Activated T-helper 1 cell treated with anti-CD3 and anti-CD28 coated beads, Interleukin-12 subunit alpha, Interleukin-12 subunit beta, Interleukin-2, Interleukin-4 antibody, amounts not matched to agents 30 ng/mL and 10 ng/mL and 1 ng/mL, durations not matched to agents 14 hours and 24 hours and 36 hours (primary cell): ENCODE measurements at regions of chr17 and their contacts with region 1.

Region 1: GRCh38 chr17:7561028-7561575 is 617 bp upstream of the SENP3 start:
- DNase-seq: peak; percentile 81
- H3K4me3 Mint-ChIP-seq: peak overlapping the region; percentile 97
- H3K27ac Mint-ChIP-seq: peak overlapping the region; percentile 92
- H3K4me1 Mint-ChIP-seq: peaks cover 56% of the 10 kb centered on the region
- H3K27me3 Mint-ChIP-seq: no peaks in the 10 kb centered on the region

Region 2: DNA sequence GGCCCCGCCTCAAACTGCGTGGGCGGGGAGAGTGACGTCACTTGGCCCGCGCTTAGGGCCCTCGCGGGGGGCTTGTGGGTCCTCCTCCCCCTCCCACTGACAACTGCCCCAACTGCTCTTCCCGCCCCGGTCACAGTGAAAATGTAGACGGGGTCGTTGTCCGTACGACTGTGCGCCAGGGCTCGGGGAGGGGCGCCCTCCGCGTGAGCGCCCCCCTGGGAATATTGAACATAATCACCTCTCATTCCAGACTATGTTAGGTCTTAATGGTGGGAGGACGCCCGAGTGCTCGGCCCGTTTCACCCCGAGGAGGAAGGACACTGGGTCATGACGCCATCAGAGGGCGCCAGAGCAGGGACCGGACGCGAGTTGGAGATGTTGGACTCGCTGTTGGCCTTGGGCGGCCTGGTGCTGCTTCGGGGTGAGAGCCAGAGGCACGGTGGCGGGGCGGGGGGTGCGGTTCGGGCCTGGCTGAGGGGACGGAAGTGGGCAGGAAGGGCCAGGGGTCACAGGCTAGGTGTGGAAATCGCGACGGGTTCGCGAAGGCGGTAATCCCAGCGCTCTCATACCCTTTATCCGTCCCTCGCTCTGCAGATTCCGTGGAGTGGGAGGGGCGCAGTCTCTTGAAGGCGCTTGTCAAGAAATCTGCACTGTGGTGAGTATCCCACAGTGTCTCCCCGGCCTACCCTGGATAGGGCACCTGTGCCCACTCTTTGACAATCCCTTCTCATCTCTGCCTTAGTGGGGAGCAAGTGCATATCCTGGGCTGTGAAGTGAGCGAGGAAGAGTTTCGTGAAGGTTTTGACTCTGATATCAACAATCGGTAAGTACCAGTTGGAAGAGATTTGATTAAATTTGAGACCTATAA is 308.7 kb before region 1 on chr17 and contains the start of gene ELP5:
- intact Hi-C with region 1: loop called (anchors 1 kb)
- DNase-seq: peak; percentile 86
- H3K4me3 Mint-ChIP-seq: peak within 1 kb of the TSS; percentile 98
- H3K27ac Mint-ChIP-seq: peak within 1 kb of the TSS; percentile 99
- H3K4me1 Mint-ChIP-seq: peaks cover 42% of the 10 kb centered on the region
- H3K27me3 Mint-ChIP-seq: peaks cover 5% of the 10 kb centered on the region
- total RNA-seq, gene ELP5: 73.6 and 75.5 TPM in 2 replicates

Region 3: DNA sequence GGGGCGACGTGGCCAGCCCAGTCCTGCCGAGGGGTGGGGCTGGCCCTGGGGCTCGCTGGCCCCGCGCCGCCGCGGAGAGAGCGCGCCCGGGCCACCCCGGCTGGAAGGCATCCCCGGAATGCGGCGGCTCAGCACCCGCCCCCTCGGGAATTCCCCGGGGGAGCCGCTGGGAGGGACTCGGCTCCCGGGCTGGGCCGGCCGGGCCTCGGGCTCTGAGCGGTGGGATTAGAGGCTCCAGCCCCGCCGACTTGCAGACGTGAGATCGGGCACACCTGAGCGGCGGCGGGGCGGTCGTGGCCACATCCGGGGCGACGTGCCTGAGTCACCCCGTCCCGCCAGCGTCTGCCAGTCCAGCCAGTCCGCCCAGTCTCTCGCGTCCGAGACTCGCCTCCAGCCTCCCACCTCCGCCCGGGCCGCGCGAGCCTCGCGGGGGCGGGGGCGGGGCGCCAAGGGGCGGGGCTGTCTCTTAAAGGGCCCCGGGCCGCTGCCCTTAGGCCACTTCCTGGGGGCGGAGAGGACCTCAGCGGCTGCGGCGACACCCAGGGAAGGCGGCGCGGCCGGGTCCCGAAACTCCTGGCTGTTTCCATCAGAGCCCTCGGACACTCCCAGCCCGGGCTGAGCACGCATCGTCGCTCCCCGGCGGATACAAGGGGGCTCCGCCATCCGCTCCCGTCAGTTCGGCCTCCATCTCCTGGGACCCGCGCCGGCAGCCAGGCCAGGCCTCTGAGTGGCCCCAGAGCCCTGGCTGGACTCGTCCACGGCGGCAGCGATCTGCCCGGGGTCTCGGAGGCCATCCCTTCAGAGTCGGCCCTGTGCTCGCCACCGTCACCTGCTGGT is 209.2 kb before region 1 on chr17 and contains the start of gene KCTD11:
- intact Hi-C with region 1: loop called (anchors 1 kb)
- DNase-seq: peak; percentile 76
- H3K4me3 Mint-ChIP-seq: peak within 1 kb of the TSS; percentile 84
- H3K27ac Mint-ChIP-seq: peak within 1 kb of the TSS; percentile 87
- H3K4me1 Mint-ChIP-seq: peaks cover 41% of the 10 kb centered on the region
- H3K27me3 Mint-ChIP-seq: no peaks in the 10 kb centered on the region
- total RNA-seq, gene KCTD11: 5.3 TPM in 2 replicates

Region 4: GRCh38 chr17:7513850-7514419 is 47.2 kb before region 1 on chr17:
- intact Hi-C with region 1: loop called (anchors 1 kb)
- DNase-seq: no peak
- H3K4me3 Mint-ChIP-seq: no peak overlapping the region
- H3K27ac Mint-ChIP-seq: no peak overlapping the region
- H3K4me1 Mint-ChIP-seq: no peaks in the 10 kb centered on the region
- H3K27me3 Mint-ChIP-seq: no peaks in the 10 kb centered on the region

Region 5: DNA sequence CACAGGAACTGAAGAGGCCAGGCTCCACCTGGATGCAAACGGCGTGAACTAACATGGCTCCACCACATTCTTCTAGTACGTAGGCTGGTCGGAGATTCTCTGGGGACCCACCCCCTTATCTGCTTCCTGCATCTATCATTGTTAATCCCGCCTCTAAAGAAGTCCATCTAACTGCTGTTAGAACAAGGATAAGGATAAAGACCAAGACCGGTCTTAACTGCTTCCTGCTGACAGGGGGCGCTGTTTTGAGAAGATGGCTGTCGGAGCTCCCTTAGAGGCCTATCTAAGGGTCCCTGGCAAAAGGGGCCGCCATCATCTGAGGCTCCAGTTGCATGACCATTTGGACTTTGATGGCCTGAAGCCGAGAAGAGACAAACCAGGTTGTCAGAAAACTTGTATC is 38.1 kb before region 1 on chr17:
- intact Hi-C with region 1: loop called (anchors 1 kb)
- DNase-seq: peak; percentile 29
- H3K4me3 Mint-ChIP-seq: no peak overlapping the region
- H3K27ac Mint-ChIP-seq: no peak overlapping the region
- H3K4me1 Mint-ChIP-seq: no peaks in the 10 kb centered on the region
- H3K27me3 Mint-ChIP-seq: no peaks in the 10 kb centered on the region

Region 6: DNA sequence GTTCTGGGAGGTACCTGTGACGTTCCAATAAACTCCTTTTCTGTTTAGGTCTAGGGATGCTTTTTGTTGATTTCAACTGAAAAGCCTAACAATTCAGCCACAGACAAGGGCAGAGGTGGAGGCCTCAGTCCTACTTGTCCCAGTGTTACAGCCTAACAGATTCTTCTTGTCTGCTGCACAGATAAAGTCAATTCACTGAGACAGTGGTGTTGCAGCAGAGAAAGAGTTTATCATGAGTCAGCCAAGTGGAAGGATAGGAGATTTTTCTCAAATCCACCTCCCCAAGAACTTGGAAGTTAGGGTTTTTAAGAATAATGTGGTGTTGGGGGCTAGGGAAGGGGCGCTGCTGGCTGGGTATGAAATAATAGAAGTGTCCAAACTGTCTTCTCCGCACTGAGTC is 23.1 kb before region 1 on chr17:
- intact Hi-C with region 1: no loop called
- DNase-seq: no peak
- H3K4me3 Mint-ChIP-seq: no peak overlapping the region
- H3K27ac Mint-ChIP-seq: no peak overlapping the region
- H3K4me1 Mint-ChIP-seq: no peaks in the 10 kb centered on the region
- H3K27me3 Mint-ChIP-seq: peaks cover 9% of the 10 kb centered on the region

Region 7: GRCh38 chr17:7548585-7549400 is 12.3 kb before region 1 on chr17 and contains the start of gene TNFSF12:
- intact Hi-C with region 1: loop called (anchors 1 kb)
- DNase-seq: peak; percentile 63
- H3K4me3 Mint-ChIP-seq: peak within 1 kb of the TSS; percentile 87
- H3K27ac Mint-ChIP-seq: peak within 1 kb of the TSS; percentile 83
- H3K4me1 Mint-ChIP-seq: peaks cover 50% of the 10 kb centered on the region
- H3K27me3 Mint-ChIP-seq: no peaks in the 10 kb centered on the region
- total RNA-seq, gene TNFSF12: 18.6 and 26.5 TPM in 2 replicates

Region 8: GRCh38 chr17:7583253-7584109 is 22.4 kb after region 1 on chr17 and contains the start of gene MPDU1:
- intact Hi-C with region 1: loop called (anchors 1 kb)
- DNase-seq: peak; percentile 95
- H3K4me3 Mint-ChIP-seq: peak within 1 kb of the TSS; percentile 98
- H3K27ac Mint-ChIP-seq: peak within 1 kb of the TSS; percentile 100
- H3K4me1 Mint-ChIP-seq: peaks cover 54% of the 10 kb centered on the region
- H3K27me3 Mint-ChIP-seq: no peaks in the 10 kb centered on the region
- total RNA-seq, gene MPDU1: 108 and 111 TPM in 2 replicates